Mammary epithelial cell (primary cell): ENCODE measurements at regions of chrX and their contacts with region 1.

Region 1: DNA sequence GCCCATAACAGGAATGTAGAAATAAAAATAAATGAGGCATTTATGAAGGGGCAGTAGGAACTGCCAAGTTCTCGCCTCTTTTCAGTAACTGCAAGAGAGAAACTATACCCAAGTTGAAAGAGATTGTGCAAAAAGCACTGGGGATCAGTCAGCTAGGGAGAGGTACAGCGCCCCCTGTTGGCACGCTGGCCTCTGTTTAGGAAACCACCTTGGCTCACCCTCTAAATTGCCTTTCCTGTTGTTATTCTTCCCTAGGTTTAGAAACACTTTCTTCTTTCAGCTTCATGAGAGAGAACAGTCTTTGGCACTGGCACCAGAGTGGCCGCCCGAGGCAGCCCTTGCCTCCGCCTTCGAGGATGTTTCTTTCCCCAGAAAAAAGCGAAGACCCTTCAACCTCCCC is 348.5 kb downstream of the MID1IP1 start:
- DNase-seq: peak; percentile 12
- H3K4me3 ChIP-seq: no peak overlapping the region
- H3K27ac ChIP-seq: no peak overlapping the region
- H3K4me1 ChIP-seq: no peaks in the 10 kb centered on the region
- H3K27me3 ChIP-seq: no peaks in the 10 kb centered on the region
- CTCF ChIP-seq: peak; percentile 63 to 85

Region 2: GRCh38 chrX:38484607-38485498 is 664.9 kb before region 1 on chrX:
- CTCF ChIA-PET with region 1: no interaction called
- dilution Hi-C with region 1: no loop called
- in situ Hi-C with region 1: no loop called
- intact Hi-C with region 1: no loop called
- DNase-seq: no peak
- H3K4me3 ChIP-seq: no peak overlapping the region
- H3K27ac ChIP-seq: no peak overlapping the region
- H3K4me1 ChIP-seq: no peaks in the 10 kb centered on the region
- H3K27me3 ChIP-seq: peaks cover 3% of the 10 kb centered on the region
- CTCF ChIP-seq: no peak

Region 3: DNA sequence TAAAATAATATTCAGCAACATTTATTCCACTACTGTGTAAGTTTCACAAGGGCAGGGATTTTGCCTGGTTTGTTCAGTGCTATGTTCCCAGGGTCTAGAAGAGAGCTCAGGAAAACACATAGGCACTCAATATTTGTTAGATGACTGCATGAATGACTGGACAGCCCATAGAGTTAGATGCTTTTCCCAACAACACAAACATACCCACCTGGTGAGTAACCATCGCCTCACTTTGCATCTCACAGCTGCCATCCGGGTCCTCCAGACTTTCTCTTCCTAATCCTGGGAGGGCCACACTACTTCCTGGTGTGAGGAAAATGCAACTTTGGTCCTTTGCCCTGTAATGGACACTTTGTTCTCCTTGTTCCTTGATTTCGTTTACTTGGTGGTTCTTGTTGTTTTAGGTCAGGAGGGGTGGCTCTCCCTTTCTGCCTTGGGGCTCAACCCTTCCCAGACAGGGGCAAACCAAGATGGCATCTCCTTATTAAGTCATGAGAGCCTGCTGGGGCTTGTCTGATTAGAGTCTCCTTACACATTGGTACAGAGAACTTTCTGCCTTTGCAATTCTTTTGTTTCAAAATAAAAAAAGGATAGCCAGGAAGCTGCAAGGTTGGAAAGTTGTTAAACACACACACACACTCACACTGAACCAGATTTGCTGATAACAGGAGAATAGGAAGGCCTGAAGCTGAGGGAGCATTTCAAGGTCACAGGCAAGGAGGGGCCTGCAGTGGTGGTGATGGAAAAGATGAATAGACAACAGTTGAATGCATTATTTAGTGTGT is 157.9 kb before region 1 on chrX:
- CTCF ChIA-PET with region 1: interaction called, 6 read pairs
- dilution Hi-C with region 1: no loop called
- in situ Hi-C with region 1: no loop called
- intact Hi-C with region 1: loop called (anchors 1 kb)
- DNase-seq: peak; percentile 70
- H3K4me3 ChIP-seq: no peak overlapping the region
- H3K27ac ChIP-seq: peak overlapping the region; percentile 31
- H3K4me1 ChIP-seq: peaks cover 5% of the 10 kb centered on the region
- H3K27me3 ChIP-seq: no peaks in the 10 kb centered on the region
- CTCF ChIP-seq: no peak

Region 4: GRCh38 chrX:39377157-39377556 is 227.4 kb after region 1 on chrX:
- CTCF ChIA-PET with region 1: no interaction called
- dilution Hi-C with region 1: no loop called
- in situ Hi-C with region 1: no loop called
- intact Hi-C with region 1: no loop called
- DNase-seq: no peak
- H3K4me3 ChIP-seq: no peak overlapping the region
- H3K27ac ChIP-seq: no peak overlapping the region
- H3K4me1 ChIP-seq: no peaks in the 10 kb centered on the region
- H3K27me3 ChIP-seq: peaks cover 7% of the 10 kb centered on the region
- CTCF ChIP-seq: no peak